ENCODE measurements at regions of chr15 and their contacts with region 1.

Region 1: GRCh38 chr15:71455107-71455506 is 339.8 kb downstream of the THSD4 start:
- DNase-seq: no peak
- ATAC-seq: peak; percentile 21
- H3K4me3 ChIP-seq: no peak overlapping the region
- H3K27ac ChIP-seq: no peak overlapping the region
- H3K4me1 ChIP-seq: no peaks in the 10 kb centered on the region
- H3K27me3 ChIP-seq: no peaks in the 10 kb centered on the region
- CTCF ChIP-seq: no peak

Region 2: DNA sequence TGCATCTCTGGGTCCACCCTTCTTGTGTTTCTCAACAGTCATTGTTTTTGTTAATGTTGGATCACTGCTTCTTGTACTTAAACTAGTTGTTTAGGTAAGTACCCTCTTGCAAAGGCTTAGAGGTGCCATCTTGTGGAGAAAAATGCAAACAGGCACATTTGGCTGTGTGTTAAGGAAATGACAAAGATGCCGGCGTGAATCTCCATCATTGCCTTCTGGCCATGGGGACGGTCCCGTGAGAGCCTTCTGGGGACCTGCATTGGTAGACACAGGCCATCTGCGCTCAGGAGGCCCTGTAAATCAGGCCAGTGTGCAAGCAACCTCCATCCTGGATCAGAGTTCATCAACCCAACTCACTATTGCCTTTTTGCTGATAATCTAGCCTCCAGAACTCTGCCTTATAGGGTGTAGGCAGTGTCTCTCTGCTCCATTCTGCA is 196.7 kb after region 1 on chr15:
- intact Hi-C with region 1: loop called in 1 of 2 experiments (anchors 10 kb)
- DNase-seq: no peak
- ATAC-seq: peak; percentile 82
- H3K4me3 ChIP-seq: no peak overlapping the region
- H3K27ac ChIP-seq: no peak overlapping the region
- H3K4me1 ChIP-seq: no peaks in the 10 kb centered on the region
- H3K27me3 ChIP-seq: no peaks in the 10 kb centered on the region
- CTCF ChIP-seq: peak in 1 of 2 donors; percentile 22

Region 3: DNA sequence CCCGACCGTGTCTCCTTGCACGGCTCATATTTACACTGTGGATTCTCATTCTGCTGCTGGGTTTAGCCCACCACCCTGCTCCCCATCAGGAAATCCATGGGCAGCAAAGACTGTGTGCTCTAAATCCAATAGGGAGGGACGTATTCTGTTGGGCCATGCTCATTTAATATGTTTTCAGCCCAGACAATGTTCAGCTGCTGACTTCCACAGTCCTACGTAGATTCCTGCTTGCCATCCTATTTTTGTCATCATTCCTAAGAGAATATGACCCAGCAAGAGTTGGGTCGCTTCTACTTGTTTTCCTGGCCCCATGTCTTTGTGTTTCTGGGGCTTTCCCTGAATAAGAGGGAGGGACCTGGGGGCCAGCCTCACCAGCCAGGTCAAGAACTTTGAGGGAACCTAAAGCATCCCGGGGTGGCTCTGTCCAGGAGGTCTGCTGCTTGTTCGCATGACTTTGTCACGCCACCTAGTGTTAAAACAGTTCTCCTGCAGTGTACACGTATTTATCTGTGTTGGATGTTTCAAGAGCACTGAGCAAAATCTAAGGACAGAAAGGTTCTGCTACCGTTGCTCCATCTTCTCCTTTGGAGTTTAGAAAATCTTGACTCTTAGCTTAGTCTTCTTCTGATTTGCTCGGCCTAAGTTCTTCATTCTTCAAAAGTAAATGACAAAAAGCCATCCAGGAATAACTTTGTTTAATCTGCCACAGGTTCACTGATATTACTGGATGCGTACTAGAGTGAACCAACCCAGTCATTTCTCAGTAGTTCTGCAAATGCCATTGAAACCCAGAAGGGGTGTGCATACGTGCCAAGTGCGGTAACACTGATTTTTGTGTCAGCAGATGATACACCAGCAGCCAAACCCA is 275.4 kb after region 1 on chr15:
- intact Hi-C with region 1: loop called in 1 of 2 experiments (anchors 10 kb)
- DNase-seq: peak in 1 of 4 donors; percentile 77
- ATAC-seq: peak; percentile 91
- H3K4me3 ChIP-seq: no peak overlapping the region
- H3K27ac ChIP-seq: peak overlapping the region in 1 of 2 donors; percentile 0
- H3K4me1 ChIP-seq: no peaks in the 10 kb centered on the region
- H3K27me3 ChIP-seq: no peaks in the 10 kb centered on the region
- CTCF ChIP-seq: peak; percentile 64 to 67

Measured in left lung (tissue), 14 donors.